ENCODE measurements at regions of chr22 and their contacts with region 1.

Region 1: GRCh38 chr22:20507253-20508066 is at the start of gene MED15:
- DNase-seq: peak; percentile 51 to 95
- H3K4me3 ChIP-seq: peak within 1 kb of the TSS; percentile 76 to 85
- H3K27ac ChIP-seq: peak within 1 kb of the TSS; percentile 98
- H3K4me1 ChIP-seq: peaks cover 12 to 27% of the 10 kb centered on the region in 2 donors
- H3K27me3 ChIP-seq: no peaks in the 10 kb centered on the region
- CTCF ChIP-seq: no peak
- total RNA-seq, gene MED15: 204 TPM

Region 2: DNA sequence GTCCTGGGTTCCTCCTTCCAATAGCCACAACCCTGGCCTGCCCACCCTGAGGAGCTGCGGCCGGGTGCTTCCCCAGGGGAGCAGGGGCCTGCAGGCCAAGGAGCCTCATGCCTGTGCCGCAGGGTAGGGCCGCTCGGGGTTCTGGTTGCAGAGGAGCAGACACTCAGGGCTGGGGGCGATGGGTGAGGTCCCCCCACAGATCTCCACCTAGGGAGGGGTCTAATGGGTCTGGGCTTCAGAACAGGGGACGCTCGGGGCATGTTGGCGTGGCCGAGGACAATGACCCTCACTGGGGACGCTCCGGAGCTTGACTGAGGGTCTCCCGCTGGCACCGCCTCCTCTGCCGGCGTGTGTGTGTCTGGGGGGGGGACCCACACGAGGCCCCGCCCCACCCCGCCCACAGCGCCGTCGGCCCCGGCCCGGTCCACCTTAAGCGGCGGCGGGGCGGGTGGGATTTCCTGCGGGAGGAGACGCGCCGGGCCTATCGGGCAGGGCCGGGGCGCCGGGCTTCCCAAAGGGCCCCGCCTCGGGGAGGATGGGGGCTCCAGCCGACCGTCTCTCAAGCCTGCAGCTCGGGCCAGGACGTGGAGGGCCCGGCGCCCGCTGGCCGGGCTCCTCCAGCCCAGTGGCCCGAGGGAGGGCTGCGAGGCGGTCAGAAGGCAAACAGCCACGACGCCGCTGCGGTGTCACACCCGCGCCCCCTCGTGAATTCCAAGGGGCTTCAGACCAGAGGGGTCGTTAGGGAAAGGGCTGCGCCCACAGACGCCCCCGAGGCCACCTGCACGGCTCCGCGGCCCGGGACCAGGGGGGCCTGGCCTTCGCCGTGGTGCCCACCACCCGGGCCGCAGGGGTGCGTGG is 376.5 kb before region 1 on chr22:
- intact Hi-C with region 1: loop called (anchors 10 kb)
- DNase-seq: peak; percentile 21 to 93
- H3K4me3 ChIP-seq: peak overlapping the region; percentile 82 to 100
- H3K27ac ChIP-seq: peak overlapping the region; percentile 90 to 98
- H3K4me1 ChIP-seq: peaks cover 23 to 37% of the 10 kb centered on the region in 2 donors
- H3K27me3 ChIP-seq: no peaks in the 10 kb centered on the region
- CTCF ChIP-seq: no peak

Region 3: GRCh38 chr22:20531315-20532201 is 24.1 kb after region 1 on chr22:
- intact Hi-C with region 1: loop called (anchors 1 kb)
- DNase-seq: peak; percentile 19 to 85
- H3K4me3 ChIP-seq: peak overlapping the region in 1 of 2 donors; percentile 29
- H3K27ac ChIP-seq: peak overlapping the region; percentile 86 to 94
- H3K4me1 ChIP-seq: peaks cover 29 to 44% of the 10 kb centered on the region in 2 donors
- H3K27me3 ChIP-seq: no peaks in the 10 kb centered on the region
- CTCF ChIP-seq: no peak

Region 4: GRCh38 chr22:20568989-20569769 is 61.7 kb after region 1 on chr22:
- intact Hi-C with region 1: loop called (anchors 1 kb)
- DNase-seq: peak; percentile 63 to 91
- H3K4me3 ChIP-seq: no peak overlapping the region
- H3K27ac ChIP-seq: peak overlapping the region; percentile 26 to 72
- H3K4me1 ChIP-seq: peaks cover 20 to 27% of the 10 kb centered on the region in 2 donors
- H3K27me3 ChIP-seq: no peaks in the 10 kb centered on the region
- CTCF ChIP-seq: no peak

Region 5: DNA sequence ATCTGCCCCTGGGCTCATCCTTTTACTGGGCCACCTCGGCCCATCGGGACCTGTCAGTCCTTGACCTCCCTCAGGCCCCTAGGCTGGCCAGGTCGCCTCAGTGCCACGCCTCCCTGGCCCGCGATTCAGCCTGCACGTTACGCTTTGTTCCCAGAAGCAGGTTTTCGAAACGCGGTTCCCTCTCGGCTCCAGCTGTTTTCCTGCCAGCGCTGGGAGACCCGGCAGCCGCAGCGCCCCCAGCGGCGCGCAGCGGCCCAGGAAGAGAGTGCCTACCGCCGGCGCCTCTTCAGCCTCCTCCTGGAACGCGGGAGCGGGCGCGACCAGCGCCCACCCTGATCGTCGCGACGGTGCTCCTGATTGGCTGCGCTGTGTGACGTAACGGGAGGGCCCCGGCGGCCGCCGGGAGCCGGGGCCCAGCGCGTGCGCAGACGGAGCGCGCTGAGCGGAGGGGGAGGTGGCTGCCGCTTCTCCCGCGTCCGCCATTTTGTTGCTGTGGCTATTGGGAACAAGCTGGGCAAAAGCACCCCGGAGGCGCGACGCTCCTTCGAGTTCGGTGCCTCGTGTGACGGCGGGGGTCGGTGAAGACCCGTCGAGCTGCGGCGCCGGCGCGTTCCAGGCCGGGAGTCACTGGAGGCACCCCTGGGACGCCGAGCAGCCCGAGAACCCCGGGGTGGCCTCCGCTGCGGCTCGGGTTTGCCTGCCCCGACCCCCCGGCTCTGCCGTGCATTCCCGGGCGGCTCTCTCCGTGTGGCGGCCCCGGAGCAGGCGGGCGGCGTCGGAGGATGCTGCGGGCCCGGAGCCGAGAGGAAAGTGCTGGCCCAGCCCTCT is 409.7 kb after region 1 on chr22 and contains the start of gene CRKL:
- intact Hi-C with region 1: loop called (anchors 5 kb)
- DNase-seq: peak; percentile 88 to 98
- H3K4me3 ChIP-seq: peak within 1 kb of the TSS; percentile 95 to 100
- H3K27ac ChIP-seq: peak within 1 kb of the TSS; percentile 92 to 96
- H3K4me1 ChIP-seq: peaks cover 5 to 10% of the 10 kb centered on the region in 2 donors
- H3K27me3 ChIP-seq: no peaks in the 10 kb centered on the region
- CTCF ChIP-seq: peak; percentile 93 to 97 (median 96)
- total RNA-seq, gene CRKL: 21.2 TPM

Measured in ascending aorta (tissue), 2 donors.